Naive thymus-derived CD4-positive, alpha-beta T cell (primary cell): ENCODE measurements at regions of chr6 and their contacts with region 1.

Region 1: GRCh38 chr6:26025894-26026832 is 61.1 kb upstream of the HFE start:
- DNase-seq: peak; percentile 82 to 98 (median 95)
- ATAC-seq: peak; percentile 60
- H3K4me3 ChIP-seq: peak overlapping the region; percentile 75
- H3K4me3 Mint-ChIP-seq: peak overlapping the region; percentile 81 to 99 (median 94)
- H3K27ac ChIP-seq: peak overlapping the region; percentile 94
- H3K27ac Mint-ChIP-seq: peak overlapping the region; percentile 93 to 100 (median 98)
- H3K4me1 ChIP-seq: peaks cover 11 to 22% of the 10 kb centered on the region in 2 donors
- H3K4me1 Mint-ChIP-seq: peaks cover 12 to 81% (median 50%) of the 10 kb centered on the region in 7 donors
- H3K27me3 ChIP-seq: no peaks in the 10 kb centered on the region
- H3K27me3 Mint-ChIP-seq: peaks cover 0 to 9% (median 0%) of the 10 kb centered on the region in 5 donors

Region 2: GRCh38 chr6:26054857-26055669 is 28.9 kb after region 1 on chr6:
- CTCF ChIA-PET with region 1: interaction called, 8 read pairs
- POLR2A ChIA-PET with region 1: interaction called, 2,497 read pairs
- intact Hi-C with region 1: loop called (anchors 1 kb)
- DNase-seq: peak; percentile 54 to 94 (median 90)
- ATAC-seq: peak; percentile 81
- H3K4me3 ChIP-seq: peak overlapping the region; percentile 93
- H3K4me3 Mint-ChIP-seq: peak overlapping the region; percentile 88 to 99 (median 95)
- H3K27ac ChIP-seq: peak overlapping the region; percentile 83
- H3K27ac Mint-ChIP-seq: peak overlapping the region; percentile 95 to 99 (median 98)
- H3K4me1 ChIP-seq: peaks cover 0 to 14% of the 10 kb centered on the region in 2 donors
- H3K4me1 Mint-ChIP-seq: peaks cover 9 to 52% (median 10%) of the 10 kb centered on the region in 7 donors
- H3K27me3 ChIP-seq: no peaks in the 10 kb centered on the region
- H3K27me3 Mint-ChIP-seq: peaks cover 0 to 10% (median 0%) of the 10 kb centered on the region in 5 donors

Region 3: DNA sequence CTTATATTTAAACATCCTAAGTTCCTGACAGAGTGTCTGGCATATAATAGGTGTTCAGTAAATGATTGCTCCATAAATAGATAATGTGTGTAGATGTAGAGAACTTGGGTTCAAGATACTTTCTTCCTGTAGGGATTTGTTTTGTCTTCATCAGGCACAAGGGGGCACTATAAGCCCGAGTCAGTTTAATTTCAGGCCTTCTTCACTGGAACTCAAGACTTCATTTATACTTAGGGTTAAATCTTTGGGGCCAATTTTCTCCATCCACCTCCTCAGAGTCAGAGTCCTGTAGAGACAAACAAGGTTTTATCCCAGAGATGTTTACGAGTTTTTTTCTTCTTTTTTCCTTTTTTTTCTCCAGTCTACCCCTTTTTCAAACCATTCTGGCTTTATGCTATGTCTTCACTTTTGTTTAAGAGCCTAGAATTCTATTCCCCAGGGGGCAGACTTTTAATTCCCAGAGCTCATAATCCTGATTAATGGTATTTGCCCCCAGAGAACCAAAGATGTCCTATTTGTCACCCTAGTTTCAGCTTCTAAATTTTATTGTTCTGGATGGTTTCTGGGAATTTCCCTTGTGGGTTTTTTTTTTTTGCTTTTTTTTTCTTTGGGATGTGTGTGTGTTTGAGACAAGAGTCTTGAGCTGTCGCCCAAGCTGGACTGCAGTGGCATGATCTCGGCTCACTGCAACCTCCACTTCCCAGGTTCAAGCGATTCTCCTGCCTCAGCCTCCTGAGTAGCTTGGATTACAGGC is 149.4 kb after region 1 on chr6:
- CTCF ChIA-PET with region 1: no interaction called
- POLR2A ChIA-PET with region 1: interaction called, 18 read pairs
- intact Hi-C with region 1: no loop called
- DNase-seq: peak in 7 of 9 donors; percentile 57 to 75 (median 66)
- ATAC-seq: peak; percentile 32
- H3K4me3 ChIP-seq: no peak overlapping the region
- H3K4me3 Mint-ChIP-seq: peak overlapping the region in 7 of 10 donors; percentile 15 to 63 (median 43)
- H3K27ac ChIP-seq: no peak overlapping the region
- H3K27ac Mint-ChIP-seq: peak overlapping the region; percentile 32 to 89 (median 76)
- H3K4me1 ChIP-seq: peaks cover 16 to 19% of the 10 kb centered on the region in 2 donors
- H3K4me1 Mint-ChIP-seq: peaks cover 20 to 51% (median 39%) of the 10 kb centered on the region in 7 donors
- H3K27me3 ChIP-seq: no peaks in the 10 kb centered on the region
- H3K27me3 Mint-ChIP-seq: no peaks in the 10 kb centered on the region

Region 4: DNA sequence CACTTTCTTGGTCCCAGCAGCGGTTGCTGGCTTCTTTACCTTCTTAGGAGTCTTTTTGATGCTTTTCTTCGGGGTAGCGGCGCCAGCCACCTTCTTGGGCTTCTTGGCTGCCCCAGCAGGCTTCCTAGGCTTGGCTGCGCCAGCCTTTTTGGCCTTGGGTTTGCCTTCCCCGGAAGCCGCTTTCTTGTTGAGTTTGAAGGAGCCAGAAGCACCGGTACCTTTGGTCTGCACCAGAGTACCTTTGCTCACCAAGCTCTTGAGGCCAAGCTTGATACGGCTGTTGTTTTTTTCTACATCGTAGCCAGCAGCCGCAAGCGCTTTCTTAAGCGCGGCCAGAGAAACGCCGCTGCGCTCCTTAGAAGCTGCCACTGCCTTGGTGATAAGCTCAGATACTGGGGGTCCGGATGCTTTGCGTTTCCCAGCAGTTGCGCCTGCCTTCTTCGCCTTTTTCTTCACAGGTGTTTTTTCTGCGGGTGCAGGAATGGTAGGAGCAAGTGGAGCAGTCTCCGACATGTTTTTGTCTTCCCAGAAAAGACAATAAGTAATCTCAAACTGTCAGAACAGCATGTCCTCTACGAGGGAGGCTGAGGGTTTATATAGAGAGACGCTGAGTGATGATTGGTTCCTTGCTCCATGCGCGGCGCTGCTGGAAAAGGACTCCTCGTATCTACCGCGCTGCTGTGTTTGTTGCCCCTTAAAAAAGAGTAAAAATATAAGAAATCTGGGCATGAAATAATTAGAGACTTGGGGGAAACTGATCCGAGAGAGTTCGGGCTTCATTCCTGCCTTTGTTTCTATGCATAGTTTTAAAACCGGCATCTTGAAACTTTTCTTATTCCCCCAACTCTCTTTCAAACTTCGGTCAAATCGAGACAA is 208.5 kb after region 1 on chr6:
- CTCF ChIA-PET with region 1: interaction called, 4 read pairs
- POLR2A ChIA-PET with region 1: interaction called, 138 read pairs
- intact Hi-C with region 1: no loop called
- DNase-seq: peak; percentile 48 to 94 (median 85)
- ATAC-seq: peak; percentile 80
- H3K4me3 ChIP-seq: peak overlapping the region; percentile 93
- H3K4me3 Mint-ChIP-seq: peak overlapping the region; percentile 87 to 99 (median 94)
- H3K27ac ChIP-seq: peak overlapping the region; percentile 87
- H3K27ac Mint-ChIP-seq: peak overlapping the region; percentile 93 to 100 (median 98)
- H3K4me1 ChIP-seq: peaks cover under 1 to 18% of the 10 kb centered on the region in 2 donors
- H3K4me1 Mint-ChIP-seq: peaks cover 18 to 52% (median 38%) of the 10 kb centered on the region in 7 donors
- H3K27me3 ChIP-seq: no peaks in the 10 kb centered on the region
- H3K27me3 Mint-ChIP-seq: peaks cover 0 to 15% (median 0%) of the 10 kb centered on the region in 5 donors

Region 5: DNA sequence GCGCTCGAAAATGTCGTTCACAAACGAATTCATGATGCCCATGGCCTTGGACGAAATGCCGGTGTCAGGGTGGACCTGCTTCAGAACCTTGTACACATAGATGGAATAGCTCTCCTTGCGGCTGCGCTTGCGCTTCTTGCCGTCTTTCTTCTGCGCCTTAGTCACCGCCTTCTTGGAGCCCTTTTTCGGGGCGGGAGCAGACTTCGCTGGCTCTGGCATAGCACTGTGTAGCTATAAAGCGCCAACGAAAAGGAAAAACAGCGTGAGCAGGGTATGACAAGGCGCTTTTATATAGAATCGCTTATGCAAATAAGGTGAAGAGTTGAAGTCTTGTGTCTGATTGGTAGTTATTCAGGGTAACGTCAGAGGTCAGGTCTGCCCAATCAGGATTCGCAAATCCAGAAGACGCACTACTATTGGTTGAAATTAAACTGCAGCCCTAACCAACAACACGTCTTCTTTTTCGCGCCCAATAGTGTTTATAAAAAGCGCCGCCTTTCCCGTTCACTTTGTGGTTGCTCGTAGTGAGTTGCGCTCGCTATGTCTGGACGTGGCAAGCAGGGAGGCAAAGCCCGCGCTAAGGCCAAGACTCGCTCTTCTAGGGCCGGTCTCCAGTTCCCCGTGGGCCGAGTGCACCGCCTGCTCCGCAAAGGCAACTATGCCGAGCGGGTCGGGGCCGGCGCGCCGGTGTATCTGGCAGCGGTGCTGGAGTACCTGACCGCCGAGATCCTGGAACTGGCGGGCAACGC is 1106.5 kb after region 1 on chr6:
- CTCF ChIA-PET with region 1: no interaction called
- POLR2A ChIA-PET with region 1: interaction called, 33 read pairs
- intact Hi-C with region 1: loop called (anchors 1 kb)
- DNase-seq: peak; percentile 73 to 99 (median 97)
- ATAC-seq: peak; percentile 93
- H3K4me3 ChIP-seq: peak overlapping the region; percentile 90
- H3K4me3 Mint-ChIP-seq: no peak overlapping the region
- H3K27ac ChIP-seq: peak overlapping the region; percentile 81
- H3K27ac Mint-ChIP-seq: no peak overlapping the region
- H3K4me1 ChIP-seq: peaks cover 10 to 18% of the 10 kb centered on the region in 2 donors
- H3K4me1 Mint-ChIP-seq: peaks cover 6 to 49% (median 21%) of the 10 kb centered on the region in 7 donors
- H3K27me3 ChIP-seq: no peaks in the 10 kb centered on the region
- H3K27me3 Mint-ChIP-seq: no peaks in the 10 kb centered on the region

Region 6: DNA sequence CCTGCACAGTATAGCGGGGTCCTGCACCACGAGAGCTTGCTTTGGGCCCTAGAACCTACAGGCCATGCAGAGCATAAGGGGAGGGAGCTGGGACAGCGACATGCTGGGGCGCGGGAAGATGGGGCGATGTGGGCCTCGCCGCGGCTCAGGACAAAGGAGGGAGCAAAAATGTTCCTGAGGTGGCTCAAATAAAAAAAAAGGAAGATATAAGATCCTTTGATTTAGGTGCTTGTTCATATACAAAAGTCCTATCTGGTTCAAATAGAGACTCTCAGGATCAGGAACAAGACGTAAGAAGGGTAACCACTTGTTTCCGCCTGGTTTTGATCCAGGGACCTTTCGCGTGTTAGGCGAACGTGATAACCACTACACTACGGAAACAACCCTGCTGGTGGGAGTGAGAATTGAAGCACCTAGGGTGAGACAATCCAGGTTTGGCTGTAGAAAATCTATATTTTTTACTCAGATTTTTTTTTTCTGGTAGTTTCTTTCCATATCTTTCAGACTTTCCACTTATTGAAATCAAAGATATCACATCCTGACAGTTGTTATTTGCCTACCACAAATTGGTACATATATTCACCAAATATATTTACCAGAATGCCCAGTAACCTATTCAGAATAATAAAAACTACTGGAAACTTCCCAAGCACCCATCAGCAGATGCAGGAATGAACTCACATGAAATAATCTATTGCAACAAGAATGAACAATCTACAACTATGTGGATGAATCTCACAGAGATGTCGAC is 1624.6 kb after region 1 on chr6:
- CTCF ChIA-PET with region 1: no interaction called
- POLR2A ChIA-PET with region 1: no interaction called
- intact Hi-C with region 1: no loop called
- DNase-seq: peak in 1 of 9 donors; percentile 40
- ATAC-seq: no peak
- H3K4me3 ChIP-seq: no peak overlapping the region
- H3K4me3 Mint-ChIP-seq: no peak overlapping the region
- H3K27ac ChIP-seq: no peak overlapping the region
- H3K27ac Mint-ChIP-seq: no peak overlapping the region
- H3K4me1 ChIP-seq: no peaks in the 10 kb centered on the region
- H3K4me1 Mint-ChIP-seq: peaks cover 0 to 9% (median 0%) of the 10 kb centered on the region in 7 donors
- H3K27me3 ChIP-seq: peaks cover 4 to 9% of the 10 kb centered on the region in 2 donors
- H3K27me3 Mint-ChIP-seq: peaks cover 35 to 76% (median 75%) of the 10 kb centered on the region in 5 donors

Region 7: DNA sequence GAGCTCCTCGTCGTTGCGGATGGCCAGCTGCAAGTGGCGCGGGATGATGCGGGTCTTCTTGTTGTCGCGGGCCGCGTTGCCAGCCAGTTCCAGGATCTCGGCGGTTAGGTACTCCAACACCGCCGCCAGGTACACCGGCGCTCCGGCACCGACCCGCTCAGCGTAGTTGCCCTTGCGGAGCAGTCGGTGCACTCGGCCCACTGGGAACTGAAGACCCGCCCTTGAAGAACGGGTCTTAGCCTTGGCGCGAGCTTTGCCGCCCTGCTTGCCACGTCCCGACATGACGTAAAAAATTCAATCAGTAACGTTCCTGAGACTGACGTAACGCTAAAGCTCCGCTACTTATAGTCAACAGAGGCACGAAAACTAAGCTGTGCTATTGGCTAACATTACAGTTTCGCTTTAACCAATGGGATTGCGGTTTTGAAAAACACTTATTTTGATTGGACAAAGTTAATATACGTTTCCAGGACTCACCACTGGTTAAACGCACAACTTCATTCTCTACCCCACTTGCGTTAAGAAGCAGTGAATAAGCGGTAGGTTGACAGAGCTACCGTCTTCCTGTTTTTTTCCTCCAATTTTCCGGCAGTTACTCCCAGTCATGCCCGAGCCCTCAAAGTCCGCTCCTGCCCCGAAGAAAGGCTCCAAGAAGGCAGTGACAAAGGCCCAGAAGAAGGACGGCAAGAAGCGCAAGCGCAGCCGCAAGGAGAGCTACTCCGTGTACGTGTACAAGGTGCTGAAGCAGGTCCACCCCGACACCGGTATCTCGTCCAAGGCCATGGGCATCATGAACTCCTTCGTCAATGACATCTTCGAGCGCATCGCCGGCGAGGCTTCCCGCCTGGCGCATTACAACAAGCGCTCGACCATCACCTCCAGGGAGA is 1812.1 kb after region 1 on chr6:
- CTCF ChIA-PET with region 1: interaction called, 3 read pairs
- POLR2A ChIA-PET with region 1: interaction called, 56 read pairs
- intact Hi-C with region 1: loop called (anchors 2 kb)
- DNase-seq: peak; percentile 65 to 96 (median 93)
- ATAC-seq: peak; percentile 86
- H3K4me3 ChIP-seq: peak overlapping the region; percentile 87
- H3K4me3 Mint-ChIP-seq: no peak overlapping the region
- H3K27ac ChIP-seq: peak overlapping the region; percentile 93
- H3K27ac Mint-ChIP-seq: no peak overlapping the region
- H3K4me1 ChIP-seq: peaks cover 22 to 34% of the 10 kb centered on the region in 2 donors
- H3K4me1 Mint-ChIP-seq: peaks cover 7 to 39% (median 29%) of the 10 kb centered on the region in 7 donors
- H3K27me3 ChIP-seq: no peaks in the 10 kb centered on the region
- H3K27me3 Mint-ChIP-seq: peaks cover 0 to 14% (median 7%) of the 10 kb centered on the region in 5 donors